Endothelial cell of umbilical vein (primary cell): ENCODE measurements at regions of chr18 and their contacts with region 1.

Region 1: DNA sequence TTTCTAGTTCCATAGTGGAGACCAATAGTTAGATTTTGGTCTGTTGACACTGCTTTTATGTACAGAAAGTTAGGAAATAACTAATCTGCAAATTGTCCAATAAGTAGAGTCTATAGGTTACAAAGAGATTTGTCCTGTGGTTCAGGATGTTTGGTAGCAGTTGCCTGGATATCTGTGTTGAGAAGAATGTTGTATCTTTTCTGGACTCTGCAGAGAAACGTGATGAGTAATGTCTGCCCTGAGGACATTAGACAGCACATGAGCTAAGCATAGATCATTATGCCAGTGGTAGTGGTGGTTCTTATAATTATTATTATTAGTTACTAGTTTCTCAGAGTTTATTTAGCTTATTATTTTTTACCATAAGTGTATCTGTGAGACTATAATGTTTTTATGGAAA is 65.8 kb downstream of the ANKRD62 start:
- DNase-seq: no peak
- H3K4me3 ChIP-seq: no peak overlapping the region
- H3K27ac ChIP-seq: no peak overlapping the region
- H3K4me1 ChIP-seq: no peaks in the 10 kb centered on the region
- H3K27me3 ChIP-seq: peaks cover 2 to 14% of the 10 kb centered on the region in 2 experiments
- CTCF ChIP-seq: no peak
- POLR2A ChIP-seq: no peak

Region 2: DNA sequence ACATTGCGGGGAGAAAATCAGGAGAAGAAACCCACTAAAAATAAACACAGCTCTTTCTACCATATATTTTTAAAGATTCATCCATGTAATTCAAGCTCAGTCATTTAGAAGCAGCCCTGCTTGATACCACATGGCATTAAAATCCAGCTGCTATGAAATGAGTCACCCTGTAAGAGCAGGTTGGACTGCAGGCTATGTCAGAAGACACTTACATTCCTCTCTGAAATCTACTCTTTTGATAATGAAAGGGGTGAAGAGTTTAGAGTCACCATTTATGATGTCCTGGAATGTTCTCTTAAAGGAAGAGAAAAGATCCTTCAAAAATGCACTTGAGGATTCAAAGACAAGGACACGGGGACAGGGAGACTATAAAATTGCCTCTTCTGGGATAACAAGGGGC is 1805.7 kb before region 1 on chr18:
- CTCF ChIA-PET with region 1: no interaction called
- POLR2A ChIA-PET with region 1: no interaction called
- dilution Hi-C with region 1: no loop called
- intact Hi-C with region 1: loop called (anchors 10 kb)
- DNase-seq: peak; percentile 4
- H3K4me3 ChIP-seq: no peak overlapping the region
- H3K27ac ChIP-seq: no peak overlapping the region
- H3K4me1 ChIP-seq: no peaks in the 10 kb centered on the region
- H3K27me3 ChIP-seq: no peaks in the 10 kb centered on the region
- CTCF ChIP-seq: no peak
- POLR2A ChIP-seq: no peak

Region 3: GRCh38 chr18:10841203-10841602 is 1318.2 kb before region 1 on chr18:
- CTCF ChIA-PET with region 1: no interaction called
- POLR2A ChIA-PET with region 1: no interaction called
- dilution Hi-C with region 1: no loop called
- intact Hi-C with region 1: no loop called
- DNase-seq: no peak
- H3K4me3 ChIP-seq: no peak overlapping the region
- H3K27ac ChIP-seq: no peak overlapping the region
- H3K4me1 ChIP-seq: no peaks in the 10 kb centered on the region
- H3K27me3 ChIP-seq: no peaks in the 10 kb centered on the region
- CTCF ChIP-seq: no peak
- POLR2A ChIP-seq: no peak

Region 4: GRCh38 chr18:12934454-12935071 is 775.1 kb after region 1 on chr18:
- CTCF ChIA-PET with region 1: no interaction called
- POLR2A ChIA-PET with region 1: no interaction called
- dilution Hi-C with region 1: no loop called
- intact Hi-C with region 1: no loop called
- DNase-seq: peak; percentile 80
- H3K4me3 ChIP-seq: no peak overlapping the region
- H3K27ac ChIP-seq: no peak overlapping the region
- H3K4me1 ChIP-seq: no peaks in the 10 kb centered on the region
- H3K27me3 ChIP-seq: peaks cover 4 to 5% of the 10 kb centered on the region in 2 experiments
- CTCF ChIP-seq: peak; percentile 84 to 92
- POLR2A ChIP-seq: no peak